GM12878 (cell line): ENCODE measurements at regions of chr9 and their contacts with region 1.

Region 1: GRCh38 chr9:126833710-126834345 is 26.6 kb upstream of the ZBTB34 start:
- DNase-seq: no peak
- ATAC-seq: no peak
- H3K4me3 ChIP-seq: no peak overlapping the region
- H3K27ac ChIP-seq: no peak overlapping the region
- H3K4me1 ChIP-seq: peaks cover 49% of the 10 kb centered on the region
- H3K27me3 ChIP-seq: no peaks in the 10 kb centered on the region
- CTCF ChIP-seq: no peak
- EP300 ChIP-seq: no peak
- POLR2A ChIP-seq: no peak
- RAD21 ChIP-seq: no peak

Region 2: DNA sequence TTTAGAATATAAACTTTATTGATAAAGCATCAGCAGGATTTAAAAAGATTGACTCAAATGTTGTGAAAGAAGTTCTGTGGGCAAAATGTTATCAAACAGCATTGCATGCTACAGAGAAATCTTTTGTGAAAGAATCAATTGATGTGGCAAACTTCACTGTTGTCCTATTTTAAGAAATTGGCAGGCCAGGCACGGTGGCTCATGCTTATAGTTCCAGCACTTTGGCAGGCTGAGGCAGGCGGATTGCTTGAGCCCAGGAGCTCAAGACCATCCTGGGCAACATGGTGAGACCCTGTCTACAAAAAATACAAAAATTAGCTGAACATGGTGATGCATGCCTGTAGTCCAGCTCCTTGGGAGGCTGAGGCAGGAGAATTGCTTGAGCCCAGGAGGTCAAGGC is 11.6 kb before region 1 on chr9:
- CTCF ChIA-PET with region 1: interaction called, 8 read pairs
- POLR2A ChIA-PET with region 1: interaction called, 6 read pairs
- RAD21 ChIA-PET with region 1: interaction called, 3 read pairs
- SMC1A ChIA-PET with region 1: interaction called, 16 read pairs
- in situ Hi-C with region 1: no loop called
- intact Hi-C with region 1: no loop called
- DNase-seq: no peak
- ATAC-seq: no peak
- H3K4me3 ChIP-seq: no peak overlapping the region
- H3K27ac ChIP-seq: no peak overlapping the region
- H3K4me1 ChIP-seq: peaks cover 3% of the 10 kb centered on the region; the same call in 1 of the 2 replicates
- H3K27me3 ChIP-seq: no peaks in the 10 kb centered on the region
- CTCF ChIP-seq: no peak
- EP300 ChIP-seq: no peak
- POLR2A ChIP-seq: no peak
- RAD21 ChIP-seq: no peak